Right cardiac atrium (tissue), 5 donors: ENCODE measurements at regions of chr11 and their contacts with region 1.

Region 1: GRCh38 chr11:68447015-68447801 is 13.3 kb upstream of the PPP6R3 start:
- DNase-seq: peak; percentile 80 to 92 (median 91)
- ATAC-seq: peak; percentile 88 to 89
- H3K4me3 ChIP-seq: no peak overlapping the region
- H3K27ac ChIP-seq: no peak overlapping the region
- H3K4me1 ChIP-seq: no peaks in the 10 kb centered on the region
- H3K27me3 ChIP-seq: no peaks in the 10 kb centered on the region

Region 2: DNA sequence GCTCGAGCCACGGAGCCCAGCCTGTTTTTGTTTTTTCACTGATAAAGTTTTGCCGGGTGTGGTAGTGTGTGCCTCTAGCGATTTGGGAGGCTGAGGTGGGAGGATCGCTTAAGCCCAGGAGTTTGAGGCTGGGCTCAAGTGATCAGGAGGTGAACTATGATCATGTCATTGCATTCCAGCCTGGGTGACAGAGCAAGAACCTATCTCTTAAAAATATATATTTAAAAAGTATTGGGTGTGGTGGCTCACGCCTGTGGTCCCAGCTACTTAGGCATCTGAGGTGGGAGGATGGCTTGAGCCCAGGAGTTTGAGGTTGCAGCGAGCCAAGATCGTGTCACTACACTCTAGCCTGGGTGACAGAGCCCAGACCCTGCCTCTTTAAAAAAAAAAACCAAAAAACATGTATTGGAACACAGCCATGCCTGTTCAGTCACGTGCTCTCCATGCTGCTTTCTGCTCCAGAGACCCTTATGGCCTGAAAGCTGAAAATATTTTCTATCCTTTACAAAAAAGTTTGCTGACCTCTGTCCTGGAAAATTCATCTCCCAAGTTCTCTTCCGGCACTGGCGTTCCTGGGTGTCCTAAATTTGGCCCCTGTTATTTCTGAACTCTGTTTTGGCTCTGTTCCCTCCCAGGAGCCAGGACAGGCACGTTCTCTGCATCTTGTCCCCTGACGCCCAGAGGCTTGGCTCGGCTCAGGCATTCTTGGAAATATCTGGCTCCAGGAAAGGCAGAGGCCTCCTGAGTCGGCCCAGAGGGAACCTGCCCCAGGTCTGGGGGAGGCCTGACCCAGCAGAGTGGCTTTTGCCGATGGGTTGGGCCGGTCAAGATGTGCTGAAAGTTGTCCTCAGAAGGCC is 48.0 kb before region 1 on chr11:
- intact Hi-C with region 1: loop called in 1 of 4 experiments (anchors 10 kb)
- DNase-seq: peak; percentile 78 to 89 (median 87)
- ATAC-seq: peak; percentile 80 to 82
- H3K4me3 ChIP-seq: no peak overlapping the region
- H3K27ac ChIP-seq: peak overlapping the region; percentile 90
- H3K4me1 ChIP-seq: peaks cover 14% of the 10 kb centered on the region
- H3K27me3 ChIP-seq: no peaks in the 10 kb centered on the region